Spleen (tissue), 13 donors: ENCODE measurements at regions of chr15 and their contacts with region 1.

Region 1: DNA sequence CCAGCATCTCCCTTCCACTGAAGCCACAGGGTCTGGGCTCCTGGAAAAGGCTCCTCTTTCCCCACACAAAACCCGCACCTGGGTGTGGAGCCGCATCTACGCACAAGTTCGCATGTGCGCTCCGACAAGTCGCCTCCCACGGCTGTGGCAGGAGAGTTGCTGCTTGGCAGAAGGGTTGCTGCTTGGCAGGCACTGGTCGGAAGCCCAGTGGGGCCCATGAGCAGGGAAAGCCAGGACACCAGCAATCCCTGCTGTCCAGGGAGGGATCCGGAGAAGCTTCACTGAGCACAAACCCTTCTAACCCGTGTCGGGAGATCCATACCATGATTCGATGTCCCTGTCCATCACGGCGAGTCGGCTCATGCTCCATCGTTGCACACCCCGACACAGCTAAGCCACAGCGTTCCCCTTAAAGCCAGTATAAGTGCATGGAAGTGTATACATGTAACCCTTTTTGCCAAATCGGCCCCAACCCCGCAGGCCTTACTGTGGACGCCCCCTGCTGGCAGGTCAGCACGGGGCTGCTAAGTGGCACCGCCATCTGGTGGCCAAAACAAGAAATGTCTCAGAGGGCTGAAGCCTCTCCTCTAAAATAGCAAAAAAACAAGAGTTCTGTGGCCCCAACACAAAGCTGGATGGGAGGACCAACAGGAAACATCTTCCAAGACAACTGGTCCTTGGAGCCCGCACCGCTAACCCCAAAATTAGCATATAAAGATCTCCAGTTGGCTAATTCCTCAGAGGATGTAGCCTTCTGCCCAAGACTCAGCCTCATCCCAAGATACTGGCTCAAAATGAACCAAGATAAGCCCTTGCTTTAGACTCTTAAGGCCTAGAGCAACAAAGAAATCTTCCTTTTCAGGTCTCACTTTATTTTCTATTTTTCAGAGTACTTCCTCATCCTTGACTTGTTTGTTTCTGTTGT is 8.3 kb downstream of the ANKRD63 start:
- DNase-seq: peak; percentile 96
- H3K4me3 ChIP-seq: no peak overlapping the region
- H3K27ac ChIP-seq: no peak overlapping the region
- H3K4me1 ChIP-seq: peaks cover 0 to 50% (median 15%) of the 10 kb centered on the region in 6 donors
- H3K27me3 ChIP-seq: peaks cover 0 to 35% (median 8%) of the 10 kb centered on the region in 7 donors
- CTCF ChIP-seq: peak; percentile 98 to 100 (median 100)
- POLR2A ChIP-seq: no peak

Region 2: GRCh38 chr15:40044717-40045571 is 229.7 kb before region 1 on chr15:
- intact Hi-C with region 1: loop called (anchors 5 kb)
- DNase-seq: peak; percentile 97
- H3K4me3 ChIP-seq: peak overlapping the region in 2 of 8 donors; percentile 4 to 29
- H3K27ac ChIP-seq: peak overlapping the region; percentile 10 to 88 (median 56)
- H3K4me1 ChIP-seq: peaks cover 37 to 72% (median 65%) of the 10 kb centered on the region in 6 donors
- H3K27me3 ChIP-seq: no peaks in the 10 kb centered on the region
- CTCF ChIP-seq: peak; percentile 81 to 96 (median 92)
- POLR2A ChIP-seq: no peak

Region 3: DNA sequence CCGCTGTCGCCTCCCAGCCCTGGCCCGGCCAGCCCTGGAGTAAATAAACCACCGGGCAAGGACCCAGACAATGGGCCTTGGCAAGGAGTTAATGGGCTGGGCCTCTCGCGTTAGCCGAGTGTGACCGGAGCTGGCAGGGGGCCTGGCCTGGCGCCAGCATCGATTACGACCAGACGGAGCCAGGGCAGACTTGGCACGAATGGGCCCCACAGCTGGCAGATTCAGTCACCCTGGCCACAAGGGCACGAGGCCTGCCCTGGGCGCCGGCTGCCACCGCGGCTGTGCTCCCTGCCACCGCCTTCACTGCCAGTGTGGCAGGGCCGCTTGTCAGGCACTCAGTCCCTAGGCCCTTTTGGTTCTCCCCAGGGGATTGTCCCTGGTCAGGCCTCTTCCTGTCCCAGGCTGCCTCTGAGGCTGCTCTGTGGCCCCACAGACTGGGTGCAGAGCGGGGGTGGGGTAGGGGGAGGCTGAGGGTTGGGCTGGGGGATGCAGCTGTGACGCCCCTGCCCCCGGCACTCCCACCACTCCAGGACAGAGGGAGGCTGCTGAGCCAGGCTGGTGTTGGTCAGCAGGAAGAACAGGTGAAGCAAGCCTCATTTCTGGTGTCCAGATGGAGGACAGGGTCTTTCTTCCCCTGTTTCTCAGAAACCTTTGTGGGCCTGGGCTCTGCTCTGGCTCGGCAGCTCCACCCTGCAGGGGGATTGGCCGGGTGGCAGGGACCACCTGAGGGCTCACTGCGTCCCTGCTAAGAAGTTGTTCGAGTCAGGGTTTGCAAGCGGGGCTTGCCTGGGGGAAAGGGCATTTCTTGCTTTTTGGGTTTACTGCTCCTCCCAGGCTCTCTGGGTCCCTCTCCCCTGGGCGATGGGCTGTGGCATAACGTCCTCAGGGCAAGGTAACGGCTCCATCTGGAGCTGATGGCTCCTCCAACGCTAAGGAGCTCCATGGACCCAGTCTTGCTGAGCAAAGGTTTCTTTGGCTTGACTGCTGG is 205.1 kb before region 1 on chr15:
- intact Hi-C with region 1: no loop called
- DNase-seq: peak; percentile 93
- H3K4me3 ChIP-seq: peak overlapping the region in 1 of 8 donors; percentile 2
- H3K27ac ChIP-seq: peak overlapping the region; percentile 1 to 80 (median 72)
- H3K4me1 ChIP-seq: peaks cover 0 to 41% (median 24%) of the 10 kb centered on the region in 6 donors
- H3K27me3 ChIP-seq: no peaks in the 10 kb centered on the region
- CTCF ChIP-seq: no peak
- POLR2A ChIP-seq: no peak

Region 4: DNA sequence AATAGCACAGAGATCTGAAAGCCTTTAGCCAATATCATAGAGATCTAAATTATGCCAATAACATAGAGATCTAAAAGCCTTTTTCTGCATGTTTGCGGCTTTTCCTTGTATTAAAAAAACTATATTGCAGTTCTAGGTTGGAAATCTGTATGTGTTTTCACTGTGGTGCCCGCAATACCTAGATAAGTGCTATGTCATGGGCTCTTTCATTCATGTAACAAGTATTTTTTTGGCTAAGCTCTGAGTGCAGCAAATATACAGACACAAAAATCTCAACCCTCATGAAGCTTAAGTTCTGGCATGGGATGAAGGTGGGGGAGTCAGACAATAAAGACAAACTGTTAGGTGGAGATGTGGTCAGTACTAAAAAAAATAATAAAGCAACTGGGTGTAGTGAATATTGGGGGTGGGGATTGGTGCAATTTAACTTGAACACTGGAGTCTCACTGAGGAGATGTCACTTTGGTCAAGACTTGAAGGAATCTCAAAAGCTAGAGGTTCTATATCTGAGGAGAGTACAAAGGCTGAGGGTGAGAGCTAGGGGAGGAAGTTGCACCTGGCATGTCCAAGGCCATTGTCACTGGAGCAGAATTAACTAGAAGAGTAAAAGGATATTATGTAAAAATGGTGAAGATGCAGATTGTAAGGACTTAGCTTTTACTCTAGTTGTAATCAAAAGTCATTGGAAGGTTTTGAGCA is 112.8 kb before region 1 on chr15:
- intact Hi-C with region 1: no loop called
- DNase-seq: no peak
- H3K4me3 ChIP-seq: peak overlapping the region in 5 of 8 donors; percentile 57 to 88 (median 69)
- H3K27ac ChIP-seq: peak overlapping the region in 1 of 8 donors; percentile 50
- H3K4me1 ChIP-seq: peaks cover 6 to 31% (median 13%) of the 10 kb centered on the region in 6 donors
- H3K27me3 ChIP-seq: peaks cover 0 to 4% (median 0%) of the 10 kb centered on the region in 7 donors
- CTCF ChIP-seq: no peak
- POLR2A ChIP-seq: no peak

Region 5: DNA sequence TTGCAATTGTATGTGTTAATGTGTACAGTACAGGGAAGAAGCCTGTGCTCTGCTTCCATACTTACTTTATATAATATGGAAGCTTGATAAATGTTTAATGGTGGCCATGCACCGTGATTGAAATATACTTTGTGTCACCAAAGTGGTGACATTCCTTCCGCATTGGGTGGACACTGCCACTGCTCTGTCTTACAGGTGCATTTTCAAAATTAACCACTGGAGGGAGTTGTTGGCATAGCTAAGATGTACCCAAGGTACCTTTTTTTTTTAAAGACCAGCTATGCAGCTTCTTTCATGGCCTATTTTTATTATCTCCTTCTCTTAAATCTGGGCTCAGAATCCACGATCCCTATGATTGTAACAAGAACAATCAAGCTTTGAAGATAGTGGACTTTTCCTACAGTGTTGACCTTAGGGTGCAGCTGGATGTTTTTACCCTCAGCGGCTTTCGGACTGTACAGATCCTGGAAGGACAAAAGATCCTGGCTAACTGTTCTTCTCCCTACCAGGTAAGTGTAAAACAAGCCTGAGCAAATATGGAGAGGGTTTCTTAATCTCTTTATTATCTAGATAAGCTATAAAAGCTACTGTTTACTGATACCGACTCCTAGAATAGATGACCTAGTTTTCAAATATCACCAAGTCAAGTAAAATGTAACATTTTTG is 57.3 kb before region 1 on chr15:
- intact Hi-C with region 1: loop called (anchors 5 kb)
- DNase-seq: no peak
- H3K4me3 ChIP-seq: no peak overlapping the region
- H3K27ac ChIP-seq: no peak overlapping the region
- H3K4me1 ChIP-seq: peaks cover 0 to 3% (median 0%) of the 10 kb centered on the region in 6 donors
- H3K27me3 ChIP-seq: no peaks in the 10 kb centered on the region
- CTCF ChIP-seq: peak; percentile 79 to 95 (median 88)
- POLR2A ChIP-seq: no peak

Region 6: DNA sequence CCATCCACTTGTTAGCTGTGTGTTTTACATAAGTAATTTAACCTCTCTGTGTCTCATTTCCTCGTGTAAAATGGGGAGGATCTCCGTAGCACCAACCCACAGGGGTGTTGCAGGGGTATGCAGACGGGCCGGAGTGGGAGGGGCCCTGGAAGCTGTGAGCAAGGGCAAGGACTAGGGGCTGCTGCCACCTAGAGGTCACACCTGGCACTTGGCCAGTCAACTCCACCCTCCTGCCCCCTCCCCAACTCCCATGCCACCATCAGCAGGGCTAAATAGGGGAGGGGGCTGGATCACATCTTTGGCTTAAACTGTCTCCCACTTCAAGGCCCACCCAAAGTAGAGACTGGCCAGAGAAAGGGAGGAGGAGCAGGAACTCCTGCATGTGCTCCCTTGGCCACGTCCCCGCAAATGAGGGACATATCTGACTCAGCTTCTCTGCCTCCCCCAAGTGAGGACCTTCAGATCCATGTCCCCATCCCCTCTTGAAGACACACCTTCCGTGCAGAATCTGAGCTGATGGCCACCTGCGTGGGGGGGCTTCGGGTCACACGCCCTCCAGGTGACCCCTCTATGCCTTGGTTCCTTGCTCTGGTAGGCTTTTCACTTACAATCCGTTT is 63.5 kb after region 1 on chr15:
- intact Hi-C with region 1: loop called (anchors 2 kb)
- DNase-seq: peak; percentile 92
- H3K4me3 ChIP-seq: peak overlapping the region in 1 of 8 donors; percentile 4
- H3K27ac ChIP-seq: peak overlapping the region in 4 of 8 donors; percentile 13 to 88 (median 49)
- H3K4me1 ChIP-seq: peaks cover 28 to 87% (median 62%) of the 10 kb centered on the region in 6 donors
- H3K27me3 ChIP-seq: peaks cover 0 to 8% (median 0%) of the 10 kb centered on the region in 7 donors
- CTCF ChIP-seq: peak; percentile 62 to 93 (median 85)
- POLR2A ChIP-seq: no peak

Region 7: GRCh38 chr15:40421246-40422157 is 146.9 kb after region 1 on chr15:
- intact Hi-C with region 1: loop called (anchors 5 kb)
- DNase-seq: peak; percentile 96
- H3K4me3 ChIP-seq: no peak overlapping the region
- H3K27ac ChIP-seq: no peak overlapping the region
- H3K4me1 ChIP-seq: peaks cover 11 to 24% (median 21%) of the 10 kb centered on the region in 6 donors
- H3K27me3 ChIP-seq: no peaks in the 10 kb centered on the region
- CTCF ChIP-seq: peak; percentile 86 to 97 (median 93)
- POLR2A ChIP-seq: no peak

Region 8: GRCh38 chr15:40477642-40478327 is 203.2 kb after region 1 on chr15:
- intact Hi-C with region 1: no loop called
- DNase-seq: peak; percentile 52
- H3K4me3 ChIP-seq: no peak overlapping the region
- H3K27ac ChIP-seq: no peak overlapping the region
- H3K4me1 ChIP-seq: peaks cover 0 to 5% (median 0%) of the 10 kb centered on the region in 6 donors
- H3K27me3 ChIP-seq: no peaks in the 10 kb centered on the region
- CTCF ChIP-seq: no peak
- POLR2A ChIP-seq: no peak